CD14-positive monocyte (primary cell): ENCODE measurements at regions of chr12 and their contacts with region 1.

Region 1: DNA sequence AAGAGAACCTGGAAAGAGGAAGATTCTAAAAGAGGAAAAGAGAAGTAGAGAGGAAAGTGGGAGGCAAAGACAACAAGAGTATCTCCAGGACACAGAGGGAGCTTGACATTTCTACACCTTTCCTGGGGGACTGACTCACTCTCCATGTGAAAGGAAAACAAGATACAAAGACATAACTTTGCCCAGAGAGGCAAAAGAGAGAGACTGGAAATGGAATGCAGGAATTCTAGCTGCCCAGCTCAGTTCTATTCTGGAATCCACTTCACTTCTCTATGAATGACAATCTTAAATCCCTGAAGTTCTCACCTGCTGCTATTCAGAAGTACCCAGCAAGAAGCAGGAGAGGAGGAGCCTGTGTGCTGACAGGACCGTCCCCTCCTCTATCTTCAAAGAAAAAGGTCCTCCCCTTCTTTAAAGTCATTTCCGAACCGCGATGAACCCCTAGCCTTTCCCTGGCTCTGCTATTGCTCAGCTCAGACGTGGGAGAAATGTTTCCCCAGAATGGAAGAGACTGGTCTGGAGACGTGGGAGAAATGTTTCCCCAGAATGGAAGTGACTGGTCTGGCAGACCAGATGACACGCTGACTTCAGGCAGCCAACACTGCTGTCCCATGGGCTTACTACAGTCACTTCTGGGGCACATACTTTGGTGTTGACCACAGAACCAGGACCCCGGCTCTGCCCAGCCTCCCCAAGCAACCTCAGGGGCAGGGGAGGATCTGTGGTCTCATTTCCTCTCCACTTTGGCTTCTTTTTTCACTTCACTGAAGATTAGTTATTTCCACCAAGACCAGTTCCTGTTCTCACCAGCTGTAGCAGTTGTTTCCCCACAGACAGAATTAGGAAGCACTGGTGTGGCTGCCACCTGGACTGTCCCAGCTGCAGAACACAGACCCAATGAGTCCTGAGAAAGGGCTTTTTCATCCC is 8.3 kb downstream of the FMNL3 start:
- DNase-seq: peak; percentile 57 to 79 (median 78)
- H3K4me3 ChIP-seq: peak overlapping the region in 2 of 3 experiments; percentile 6 to 68
- H3K4me3 Mint-ChIP-seq: peak overlapping the region; percentile 79 to 94
- H3K27ac ChIP-seq: peak overlapping the region; percentile 21 to 67
- H3K27ac Mint-ChIP-seq: peak overlapping the region; percentile 80 to 92 (median 89)
- H3K4me1 ChIP-seq: peaks cover 30 to 42% of the 10 kb centered on the region in 2 donors
- H3K4me1 Mint-ChIP-seq: peaks cover 39% of the 10 kb centered on the region
- H3K27me3 ChIP-seq: no peaks in the 10 kb centered on the region
- H3K27me3 Mint-ChIP-seq: peaks cover 0 to 5% (median under 1%) of the 10 kb centered on the region in 3 donors
- CTCF ChIP-seq: no peak

Region 2: DNA sequence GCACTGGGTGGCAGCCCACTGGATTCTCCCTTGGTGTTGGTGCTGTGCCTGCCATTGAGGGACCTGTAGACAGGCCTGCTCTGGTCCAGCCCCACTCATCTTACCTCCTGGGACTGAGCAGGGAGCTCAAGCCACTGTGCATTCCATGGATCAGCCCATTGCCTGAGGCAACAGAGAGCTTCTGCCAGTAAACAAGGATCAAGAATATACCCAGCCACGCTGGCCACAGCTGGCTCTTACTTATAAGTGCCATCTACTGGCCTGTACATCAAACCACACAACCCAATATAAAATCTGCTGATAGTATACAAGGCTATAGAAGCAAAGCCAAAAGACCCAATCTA is 89.2 kb before region 1 on chr12:
- intact Hi-C with region 1: no loop called
- DNase-seq: no peak
- H3K4me3 ChIP-seq: no peak overlapping the region
- H3K4me3 Mint-ChIP-seq: no peak overlapping the region
- H3K27ac ChIP-seq: no peak overlapping the region
- H3K27ac Mint-ChIP-seq: no peak overlapping the region
- H3K4me1 ChIP-seq: no peaks in the 10 kb centered on the region
- H3K4me1 Mint-ChIP-seq: peaks cover 7% of the 10 kb centered on the region
- H3K27me3 ChIP-seq: no peaks in the 10 kb centered on the region
- H3K27me3 Mint-ChIP-seq: peaks cover 2 to 23% (median 11%) of the 10 kb centered on the region in 3 donors
- CTCF ChIP-seq: no peak

Region 3: DNA sequence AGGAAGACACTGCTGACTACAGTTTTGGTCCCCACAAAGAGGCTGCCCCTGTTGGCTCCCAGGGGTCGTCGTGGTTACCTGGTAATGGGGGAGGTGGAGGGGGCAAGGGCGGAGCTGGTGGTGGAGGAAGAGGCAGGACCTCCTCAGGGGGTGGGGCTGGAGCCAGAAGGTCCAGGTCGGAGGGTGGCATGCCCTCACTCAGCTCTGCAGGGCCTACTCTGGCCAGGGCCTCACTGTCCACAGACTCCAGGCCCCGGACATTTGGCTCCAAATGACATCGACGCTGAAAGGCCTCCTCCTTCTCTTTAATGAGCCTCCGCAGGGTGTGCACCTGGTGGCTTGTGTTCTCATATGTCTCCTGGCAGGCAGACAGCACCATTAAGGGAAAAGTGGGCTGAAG is 47.0 kb before region 1 on chr12:
- intact Hi-C with region 1: no loop called
- DNase-seq: no peak
- H3K4me3 ChIP-seq: no peak overlapping the region
- H3K4me3 Mint-ChIP-seq: no peak overlapping the region
- H3K27ac ChIP-seq: no peak overlapping the region
- H3K27ac Mint-ChIP-seq: no peak overlapping the region
- H3K4me1 ChIP-seq: no peaks in the 10 kb centered on the region
- H3K4me1 Mint-ChIP-seq: peaks cover 9% of the 10 kb centered on the region
- H3K27me3 ChIP-seq: no peaks in the 10 kb centered on the region
- H3K27me3 Mint-ChIP-seq: peaks cover 0 to 1% (median under 1%) of the 10 kb centered on the region in 3 donors
- CTCF ChIP-seq: no peak

Region 4: GRCh38 chr12:49662998-49663843 is 35.7 kb before region 1 on chr12:
- intact Hi-C with region 1: loop called in 1 of 2 experiments (anchors 5 kb)
- DNase-seq: peak; percentile 77 to 94 (median 84)
- H3K4me3 ChIP-seq: peak overlapping the region in 1 of 3 experiments; percentile 65
- H3K4me3 Mint-ChIP-seq: peak overlapping the region; percentile 60 to 86
- H3K27ac ChIP-seq: peak overlapping the region; percentile 52 to 81
- H3K27ac Mint-ChIP-seq: peak overlapping the region; percentile 82 to 96 (median 89)
- H3K4me1 ChIP-seq: peaks cover 45 to 51% of the 10 kb centered on the region in 2 donors
- H3K4me1 Mint-ChIP-seq: peaks cover 58% of the 10 kb centered on the region
- H3K27me3 ChIP-seq: no peaks in the 10 kb centered on the region
- H3K27me3 Mint-ChIP-seq: peaks cover 0 to 6% (median 2%) of the 10 kb centered on the region in 3 donors
- CTCF ChIP-seq: no peak